Activated naive CD4-positive, alpha-beta T cell treated with anti-CD3 and anti-CD28 coated beads for 36 hours (primary cell): ENCODE measurements at regions of chr12 and their contacts with region 1.

Region 1: DNA sequence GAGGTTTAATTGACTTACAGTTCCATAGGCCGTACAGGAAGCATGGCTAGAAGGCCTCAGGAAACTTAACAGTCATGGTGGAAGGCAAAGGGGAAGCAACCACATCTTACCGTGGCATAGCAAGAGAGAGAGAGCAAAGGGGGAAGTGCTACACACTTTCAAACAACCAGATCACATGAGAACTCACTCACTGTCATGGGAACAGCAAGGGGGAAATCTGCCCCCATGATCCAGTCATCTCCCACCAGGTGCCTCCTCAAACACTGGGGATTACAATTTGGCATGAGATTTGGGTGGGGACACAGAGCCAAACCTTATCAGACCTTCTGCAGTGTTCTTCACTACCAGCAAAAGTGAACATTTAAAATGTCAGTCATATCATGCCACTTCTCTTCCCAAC is 58.9 kb downstream of the USP15 start:
- DNase-seq: no peak
- H3K4me3 Mint-ChIP-seq: no peak overlapping the region
- H3K27ac Mint-ChIP-seq: no peak overlapping the region
- H3K4me1 Mint-ChIP-seq: peaks cover 30% of the 10 kb centered on the region
- H3K27me3 Mint-ChIP-seq: no peaks in the 10 kb centered on the region

Region 2: DNA sequence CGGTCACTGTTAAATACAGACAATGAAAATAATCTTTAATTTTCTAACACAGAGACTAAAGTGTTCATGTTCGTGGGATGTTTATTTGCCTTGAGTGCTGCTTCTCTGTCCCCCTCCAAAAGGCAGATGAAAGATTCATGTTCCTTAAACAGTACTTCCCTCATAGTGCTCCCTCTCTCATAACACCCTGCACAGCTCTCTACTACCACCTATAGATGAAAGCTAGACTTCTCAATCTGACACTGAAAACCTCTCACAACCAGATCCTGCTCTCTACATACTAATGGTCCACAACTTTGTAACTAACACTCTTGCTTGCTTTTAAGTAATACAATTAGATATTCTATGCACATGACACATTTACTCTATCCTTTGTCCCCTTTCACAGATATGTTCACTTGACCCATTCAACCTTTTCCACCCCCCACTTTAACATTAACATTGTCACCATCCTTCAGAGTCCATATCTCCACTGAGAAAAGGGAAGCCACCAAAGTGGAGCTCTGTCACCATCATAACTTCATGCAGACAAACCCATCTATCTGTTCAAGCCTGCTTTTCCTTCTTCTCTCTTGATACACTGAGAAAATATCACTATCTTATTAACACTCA is 325.2 kb before region 1 on chr12:
- CTCF ChIA-PET with region 1: no interaction called
- intact Hi-C with region 1: no loop called
- DNase-seq: no peak
- H3K4me3 Mint-ChIP-seq: no peak overlapping the region
- H3K27ac Mint-ChIP-seq: no peak overlapping the region
- H3K4me1 Mint-ChIP-seq: no peaks in the 10 kb centered on the region
- H3K27me3 Mint-ChIP-seq: no peaks in the 10 kb centered on the region

Region 3: GRCh38 chr12:62166510-62166909 is 152.5 kb before region 1 on chr12:
- CTCF ChIA-PET with region 1: no interaction called
- intact Hi-C with region 1: no loop called
- DNase-seq: no peak
- H3K4me3 Mint-ChIP-seq: no peak overlapping the region
- H3K27ac Mint-ChIP-seq: no peak overlapping the region
- H3K4me1 Mint-ChIP-seq: peaks cover 10% of the 10 kb centered on the region
- H3K27me3 Mint-ChIP-seq: no peaks in the 10 kb centered on the region

Region 4: DNA sequence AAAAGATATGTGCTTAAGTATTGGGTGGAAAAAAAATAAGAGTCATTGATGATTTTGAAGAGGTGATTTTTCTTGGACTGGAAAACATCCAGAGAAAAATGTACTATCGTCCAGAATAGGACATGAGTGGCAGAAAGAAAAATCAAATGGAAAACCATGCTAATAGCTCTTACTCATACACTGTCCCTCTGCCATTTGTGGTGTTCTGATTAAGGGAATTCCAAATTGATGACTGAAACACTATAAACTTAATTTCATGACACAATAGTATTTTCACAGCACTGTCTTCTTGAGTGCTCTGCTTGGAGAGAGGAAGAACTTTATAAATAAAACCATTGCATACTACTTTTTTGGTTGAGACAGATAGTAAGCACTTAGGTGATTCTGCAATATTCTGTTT is 13.5 kb after region 1 on chr12:
- CTCF ChIA-PET with region 1: interaction called, 3 read pairs
- intact Hi-C with region 1: loop called (anchors 1 kb)
- DNase-seq: no peak
- H3K4me3 Mint-ChIP-seq: no peak overlapping the region
- H3K27ac Mint-ChIP-seq: no peak overlapping the region
- H3K4me1 Mint-ChIP-seq: peaks cover 9% of the 10 kb centered on the region
- H3K27me3 Mint-ChIP-seq: no peaks in the 10 kb centered on the region

Region 5: GRCh38 chr12:62466594-62467491 is 147.8 kb after region 1 on chr12 and contains the start of gene MON2:
- CTCF ChIA-PET with region 1: no interaction called
- intact Hi-C with region 1: no loop called
- DNase-seq: peak; percentile 87
- H3K4me3 Mint-ChIP-seq: peak within 1 kb of the TSS; percentile 74
- H3K27ac Mint-ChIP-seq: peak within 1 kb of the TSS; percentile 88
- H3K4me1 Mint-ChIP-seq: peaks cover 15% of the 10 kb centered on the region
- H3K27me3 Mint-ChIP-seq: no peaks in the 10 kb centered on the region
- total RNA-seq, gene MON2: 29.2 to 29.8 TPM